PC-9 (cell line): ENCODE measurements at regions of chr1 and their contacts with region 1.

Region 1: GRCh38 chr1:183915625-183916510 is 110.9 kb downstream of the RGL1 start:
- DNase-seq: peak; percentile 68 to 94
- H3K4me3 ChIP-seq: no peak overlapping the region
- H3K27ac ChIP-seq: peak overlapping the region; percentile 29; the same call in 1 of the 2 replicates
- H3K4me1 ChIP-seq: peaks cover 12% of the 10 kb centered on the region
- H3K27me3 ChIP-seq: no peaks in the 10 kb centered on the region
- CTCF ChIP-seq: peak; percentile 93

Region 2: GRCh38 chr1:183635606-183636333 is 280.1 kb before region 1 on chr1 and contains the start of gene ARPC5:
- CTCF ChIA-PET with region 1: no interaction called
- POLR2A ChIA-PET with region 1: no interaction called
- intact Hi-C with region 1: loop called (anchors 1 kb)
- DNase-seq: peak; percentile 89 to 96
- H3K4me3 ChIP-seq: peak within 1 kb of the TSS; percentile 98
- H3K27ac ChIP-seq: peak within 1 kb of the TSS; percentile 69
- H3K4me1 ChIP-seq: peaks cover 36% of the 10 kb centered on the region
- H3K27me3 ChIP-seq: no peaks in the 10 kb centered on the region
- CTCF ChIP-seq: no peak
- total RNA-seq, gene ARPC5: 143 and 150 TPM in 2 replicates

Region 3: GRCh38 chr1:183685112-183685713 is 230.7 kb before region 1 on chr1:
- CTCF ChIA-PET with region 1: interaction called, 6 read pairs
- POLR2A ChIA-PET with region 1: no interaction called
- intact Hi-C with region 1: loop called (anchors 1 kb)
- DNase-seq: peak; percentile 17 to 51
- H3K4me3 ChIP-seq: no peak overlapping the region
- H3K27ac ChIP-seq: no peak overlapping the region
- H3K4me1 ChIP-seq: peaks cover 8% of the 10 kb centered on the region; the same call in 1 of the 2 replicates
- H3K27me3 ChIP-seq: no peaks in the 10 kb centered on the region
- CTCF ChIP-seq: peak; percentile 88

Region 4: DNA sequence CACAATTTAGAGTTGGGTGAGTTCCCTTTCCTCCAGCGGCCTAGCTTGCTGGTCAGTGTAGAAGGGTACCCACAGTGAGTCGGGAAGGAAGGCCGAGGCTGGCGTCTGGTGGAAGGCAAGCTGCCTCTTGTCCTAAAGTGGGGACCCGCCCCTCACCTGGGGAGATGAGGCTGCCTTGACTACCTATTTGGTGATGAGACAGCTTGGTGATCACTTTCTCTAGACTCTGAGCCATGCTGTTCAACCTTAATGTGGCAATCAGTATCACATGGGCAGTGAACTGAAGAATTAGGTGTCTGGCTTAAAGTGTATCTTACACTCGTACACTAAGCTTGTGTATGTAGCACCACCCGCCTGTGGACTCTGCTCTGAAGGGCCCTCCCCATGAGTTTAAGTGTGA is 20.9 kb after region 1 on chr1:
- CTCF ChIA-PET with region 1: no interaction called
- POLR2A ChIA-PET with region 1: no interaction called
- intact Hi-C with region 1: no loop called
- DNase-seq: no peak
- H3K4me3 ChIP-seq: no peak overlapping the region
- H3K27ac ChIP-seq: no peak overlapping the region
- H3K4me1 ChIP-seq: no peaks in the 10 kb centered on the region
- H3K27me3 ChIP-seq: no peaks in the 10 kb centered on the region
- CTCF ChIP-seq: no peak

Region 5: GRCh38 chr1:184037849-184038591 is 122.2 kb after region 1 on chr1:
- CTCF ChIA-PET with region 1: interaction called, 12 read pairs
- POLR2A ChIA-PET with region 1: no interaction called
- intact Hi-C with region 1: no loop called
- DNase-seq: no peak
- H3K4me3 ChIP-seq: no peak overlapping the region
- H3K27ac ChIP-seq: no peak overlapping the region
- H3K4me1 ChIP-seq: no peaks in the 10 kb centered on the region
- H3K27me3 ChIP-seq: peaks cover 16% of the 10 kb centered on the region; the same call in 1 of the 2 replicates
- CTCF ChIP-seq: no peak

Region 6: GRCh38 chr1:184186167-184186566 is 270.3 kb after region 1 on chr1:
- CTCF ChIA-PET with region 1: no interaction called
- POLR2A ChIA-PET with region 1: no interaction called
- intact Hi-C with region 1: no loop called
- DNase-seq: no peak
- H3K4me3 ChIP-seq: no peak overlapping the region
- H3K27ac ChIP-seq: no peak overlapping the region
- H3K4me1 ChIP-seq: no peaks in the 10 kb centered on the region
- H3K27me3 ChIP-seq: no peaks in the 10 kb centered on the region; the same call in none of the 2 replicates
- CTCF ChIP-seq: no peak

Region 7: DNA sequence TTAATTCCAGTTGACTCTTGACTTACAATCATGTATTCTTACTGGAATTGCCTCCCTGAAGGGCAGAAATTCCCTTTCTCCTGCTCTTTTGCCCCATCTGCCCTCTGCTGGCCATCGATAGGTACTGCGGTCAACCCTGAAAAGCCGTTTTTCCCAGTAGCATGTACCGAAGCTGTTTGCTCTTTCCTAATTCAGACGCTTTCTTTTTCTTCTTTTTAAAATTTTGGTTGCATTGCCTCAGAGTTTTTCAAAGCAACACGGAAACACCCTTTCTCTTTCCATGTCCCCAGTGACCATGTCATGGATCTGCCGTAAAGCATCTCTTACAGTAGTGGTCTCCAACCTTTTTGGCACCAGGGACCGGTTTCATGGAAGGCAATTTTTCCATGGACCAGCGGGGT is 306.8 kb after region 1 on chr1:
- CTCF ChIA-PET with region 1: no interaction called
- POLR2A ChIA-PET with region 1: no interaction called
- intact Hi-C with region 1: loop called (anchors 1 kb)
- DNase-seq: peak; percentile 40 to 47
- H3K4me3 ChIP-seq: no peak overlapping the region
- H3K27ac ChIP-seq: no peak overlapping the region
- H3K4me1 ChIP-seq: no peaks in the 10 kb centered on the region
- H3K27me3 ChIP-seq: no peaks in the 10 kb centered on the region
- CTCF ChIP-seq: peak; percentile 92

Region 8: DNA sequence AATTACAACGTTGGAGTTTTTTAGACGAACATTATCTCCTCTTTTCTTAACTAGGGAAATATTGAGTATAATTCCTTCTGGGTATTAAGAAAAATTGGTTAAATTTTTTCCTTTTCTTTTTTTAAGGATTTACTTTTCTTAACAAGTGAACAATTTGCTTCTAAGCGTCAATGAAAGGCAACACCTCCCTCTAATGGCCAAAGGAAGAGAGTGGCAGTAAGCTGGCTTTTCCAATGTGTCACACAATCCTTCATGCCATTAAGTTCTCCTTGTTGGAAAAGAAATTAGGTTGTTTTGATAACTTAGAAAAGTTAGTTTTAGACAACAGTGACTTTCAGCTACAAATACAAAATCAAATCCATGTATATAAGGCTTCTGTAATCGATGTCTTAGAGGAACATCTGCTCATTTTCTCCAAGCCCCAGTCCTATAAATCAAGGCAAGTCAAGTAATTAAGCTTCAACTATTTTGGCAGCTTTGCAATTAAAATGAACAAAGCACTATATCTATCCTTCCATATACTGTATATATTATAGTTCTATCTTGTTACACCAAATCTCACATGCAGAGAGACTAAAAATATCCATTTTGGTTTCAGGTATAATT is 776.0 kb after region 1 on chr1:
- CTCF ChIA-PET with region 1: no interaction called
- POLR2A ChIA-PET with region 1: no interaction called
- intact Hi-C with region 1: loop called (anchors 2 kb)
- DNase-seq: peak in 1 of 2 experiments; percentile 29
- H3K4me3 ChIP-seq: no peak overlapping the region
- H3K27ac ChIP-seq: no peak overlapping the region
- H3K4me1 ChIP-seq: no peaks in the 10 kb centered on the region
- H3K27me3 ChIP-seq: no peaks in the 10 kb centered on the region
- CTCF ChIP-seq: peak; percentile 81